Left lung (tissue), 14 donors: ENCODE measurements at regions of chr4 and their contacts with region 1.

Region 1: GRCh38 chr4:170047771-170048354 is 21.7 kb upstream of the MFAP3L start:
- DNase-seq: peak in 1 of 4 donors; percentile 78
- ATAC-seq: peak; percentile 64
- H3K4me3 ChIP-seq: no peak overlapping the region
- H3K27ac ChIP-seq: no peak overlapping the region
- H3K4me1 ChIP-seq: no peaks in the 10 kb centered on the region
- H3K27me3 ChIP-seq: no peaks in the 10 kb centered on the region
- CTCF ChIP-seq: peak; percentile 68

Region 2: DNA sequence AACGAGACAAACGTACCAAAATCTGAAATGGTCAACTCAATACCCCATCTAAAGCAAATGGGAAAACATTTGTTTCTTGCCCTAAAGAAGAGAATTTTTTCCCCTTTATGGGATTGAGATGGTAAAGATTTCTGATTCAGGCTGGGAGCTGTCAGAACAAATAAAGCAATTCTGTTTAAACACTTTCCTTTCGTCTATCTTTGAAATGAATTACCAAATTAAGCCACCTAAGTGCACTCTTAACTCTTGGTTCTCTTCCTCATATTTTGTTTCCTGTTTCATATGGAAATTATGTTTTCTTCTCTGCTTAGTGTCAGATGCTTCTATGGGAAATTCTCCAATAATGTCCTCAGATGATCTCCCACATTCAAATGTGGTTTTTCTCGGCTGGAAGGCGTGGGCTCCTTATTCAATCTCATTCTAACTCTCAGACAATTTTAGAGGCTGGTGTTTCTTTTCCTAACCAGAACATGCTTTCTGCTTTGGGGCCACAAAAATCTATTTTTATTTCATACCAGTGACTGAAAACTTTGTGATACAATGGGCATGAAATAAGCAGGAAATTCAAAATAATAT is 239.8 kb before region 1 on chr4:
- intact Hi-C with region 1: loop called in 1 of 2 experiments (anchors 2 kb)
- DNase-seq: no peak
- ATAC-seq: no peak
- H3K4me3 ChIP-seq: no peak overlapping the region
- H3K27ac ChIP-seq: no peak overlapping the region
- H3K4me1 ChIP-seq: no peaks in the 10 kb centered on the region
- H3K27me3 ChIP-seq: no peaks in the 10 kb centered on the region
- CTCF ChIP-seq: no peak